Cardiac septum (tissue), 1 donor: ENCODE measurements at regions of chr5 and their contacts with region 1.

Region 1: GRCh38 chr5:150544611-150545219 is 36.8 kb downstream of the NDST1 start:
- DNase-seq: peak; percentile 90

Region 2: DNA sequence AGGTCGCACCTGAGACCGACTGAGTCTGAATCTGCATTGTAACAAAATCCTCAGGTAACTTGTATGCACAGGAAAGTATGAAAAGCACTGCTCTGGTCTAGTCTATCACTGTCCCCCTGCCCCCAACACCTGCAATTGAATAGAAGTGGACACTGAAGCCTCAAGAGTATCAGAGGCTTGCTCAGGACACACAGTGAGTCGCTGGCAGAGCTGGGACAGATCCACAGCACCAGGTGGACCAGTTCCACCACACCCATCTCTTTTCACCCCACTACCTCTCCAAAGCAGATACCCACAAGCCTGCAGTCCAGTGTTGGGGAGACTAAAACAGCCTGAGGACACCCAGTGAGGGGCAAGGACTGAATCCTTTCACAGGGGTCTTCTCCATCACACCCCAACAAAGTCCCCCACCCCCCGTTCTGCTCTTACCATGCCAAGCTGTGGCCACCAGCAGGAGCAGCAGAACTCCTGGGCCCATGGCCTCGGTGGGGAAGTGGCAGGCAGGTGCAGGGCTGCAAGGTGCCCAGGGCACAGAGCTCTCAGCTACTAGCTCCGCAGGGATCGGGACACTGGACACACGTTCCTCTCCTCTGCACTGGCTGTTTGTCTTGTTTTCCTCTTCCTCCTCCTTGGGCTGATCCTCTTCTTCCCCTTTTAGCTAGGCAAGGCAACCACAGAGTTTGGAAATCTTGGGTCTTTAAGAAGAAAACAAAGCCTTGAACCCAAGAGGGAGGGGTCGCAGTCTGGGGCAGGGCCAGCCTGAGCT is 458.6 kb before region 1 on chr5 and contains the start of gene CSF1R:
- intact Hi-C with region 1: no loop called
- DNase-seq: peak; percentile 75
- total RNA-seq, gene CSF1R: 11.9 TPM

Region 3: GRCh38 chr5:150458819-150459557 is 85.7 kb before region 1 on chr5:
- intact Hi-C with region 1: loop called (anchors 1 kb)
- DNase-seq: peak; percentile 92

Region 4: DNA sequence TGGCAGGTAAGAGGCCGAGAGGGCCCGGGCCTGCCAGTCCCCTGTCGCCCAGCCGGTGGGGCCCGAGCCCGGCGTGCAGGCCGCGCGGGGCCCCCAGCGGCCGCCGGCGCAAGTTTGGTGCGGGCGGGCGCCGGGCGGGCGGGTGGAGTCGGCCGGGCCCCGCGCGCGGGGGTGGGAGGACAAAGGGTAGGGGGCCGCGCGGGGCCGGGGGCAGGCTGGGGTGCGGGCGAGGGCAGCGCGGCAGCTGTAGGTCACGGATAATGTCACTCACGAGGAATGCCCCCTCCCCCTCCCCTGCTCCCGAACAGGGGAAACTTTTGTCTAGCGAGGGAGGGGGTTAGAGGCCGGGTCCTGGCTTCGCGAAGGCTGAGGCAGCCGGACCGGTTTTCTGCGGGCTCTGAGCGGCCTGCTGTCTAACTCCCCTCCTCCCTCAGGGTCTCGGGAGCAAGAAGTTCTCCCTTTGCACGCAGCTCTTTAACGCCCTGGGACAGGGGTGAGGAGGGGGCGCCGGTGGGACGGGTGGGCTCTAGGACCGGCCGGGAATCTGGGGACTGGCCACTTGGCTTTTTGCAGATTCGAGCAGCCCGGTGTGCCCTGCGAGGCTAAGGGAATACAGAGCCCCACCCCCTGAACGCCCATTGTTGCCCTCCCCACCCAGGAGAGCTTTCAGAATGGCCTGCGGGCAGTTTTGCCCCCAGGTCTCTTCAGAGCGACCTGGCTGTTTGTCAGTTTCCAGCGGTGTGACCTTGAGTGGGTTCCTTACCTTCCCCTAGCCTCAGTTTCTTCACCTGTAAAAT is 58.1 kb before region 1 on chr5:
- intact Hi-C with region 1: loop called (anchors 2 kb)
- DNase-seq: no peak

Region 5: GRCh38 chr5:150573867-150574817 is 29.4 kb after region 1 on chr5:
- intact Hi-C with region 1: no loop called
- DNase-seq: peak; percentile 72